T-cell (primary cell): ENCODE measurements at regions of chr14 and their contacts with region 1.

Region 1: GRCh38 chr14:106185837-106186233 is 659.5 kb downstream of the TMEM121 start:
- DNase-seq: peak; percentile 45 to 80 (median 68)
- ATAC-seq: peak; percentile 73 to 81 (median 78)
- H3K4me3 ChIP-seq: no peak overlapping the region
- H3K4me3 Mint-ChIP-seq: peak overlapping the region; percentile 22 to 66 (median 34)
- H3K27ac ChIP-seq: peak overlapping the region; percentile 70
- H3K27ac Mint-ChIP-seq: peak overlapping the region; percentile 81 to 85
- H3K4me1 ChIP-seq: peaks cover 24 to 27% of the 10 kb centered on the region in 2 experiments
- H3K4me1 Mint-ChIP-seq: peaks cover 37 to 42% (median 38%) of the 10 kb centered on the region in 3 donors
- H3K27me3 ChIP-seq: no peaks in the 10 kb centered on the region
- H3K27me3 Mint-ChIP-seq: peaks cover 0 to 4% of the 10 kb centered on the region in 2 donors

Region 2: DNA sequence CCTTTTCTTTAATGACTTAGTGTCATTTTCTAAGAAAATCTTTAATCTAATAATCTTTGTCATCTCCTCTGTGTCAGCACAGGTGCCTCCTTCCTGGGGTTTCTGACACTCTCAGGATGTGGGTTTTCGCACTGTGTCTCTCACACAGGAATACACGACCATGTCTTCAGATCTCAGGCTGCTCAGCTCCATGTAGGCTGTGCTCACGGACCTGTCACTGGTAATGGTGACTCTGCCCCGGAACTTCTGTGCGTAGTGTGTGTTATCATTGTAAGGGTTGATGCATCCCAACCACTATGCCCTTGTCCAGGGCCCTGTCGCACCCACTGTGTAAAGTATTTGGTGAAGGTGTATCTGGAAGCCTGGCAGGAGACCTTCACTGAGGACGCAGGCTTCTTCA is 11.6 kb before region 1 on chr14:
- CTCF ChIA-PET with region 1: interaction called in 1 of 2 experiments, 10 read pairs
- POLR2A ChIA-PET with region 1: interaction called, 3 read pairs
- DNase-seq: peak; percentile 32 to 84 (median 70)
- ATAC-seq: peak; percentile 75 to 87 (median 82)
- H3K4me3 ChIP-seq: peak overlapping the region in 1 of 2 donors; percentile 26
- H3K4me3 Mint-ChIP-seq: peak overlapping the region; percentile 6 to 69 (median 7)
- H3K27ac ChIP-seq: peak overlapping the region; percentile 68
- H3K27ac Mint-ChIP-seq: peak overlapping the region; percentile 91
- H3K4me1 ChIP-seq: peaks cover 30 to 39% of the 10 kb centered on the region in 2 experiments
- H3K4me1 Mint-ChIP-seq: peaks cover 70 to 75% (median 75%) of the 10 kb centered on the region in 3 donors
- H3K27me3 ChIP-seq: no peaks in the 10 kb centered on the region
- H3K27me3 Mint-ChIP-seq: no peaks in the 10 kb centered on the region